CD8-positive, alpha-beta T cell (primary cell): ENCODE measurements at regions of chr2 and their contacts with region 1.

Region 1: DNA sequence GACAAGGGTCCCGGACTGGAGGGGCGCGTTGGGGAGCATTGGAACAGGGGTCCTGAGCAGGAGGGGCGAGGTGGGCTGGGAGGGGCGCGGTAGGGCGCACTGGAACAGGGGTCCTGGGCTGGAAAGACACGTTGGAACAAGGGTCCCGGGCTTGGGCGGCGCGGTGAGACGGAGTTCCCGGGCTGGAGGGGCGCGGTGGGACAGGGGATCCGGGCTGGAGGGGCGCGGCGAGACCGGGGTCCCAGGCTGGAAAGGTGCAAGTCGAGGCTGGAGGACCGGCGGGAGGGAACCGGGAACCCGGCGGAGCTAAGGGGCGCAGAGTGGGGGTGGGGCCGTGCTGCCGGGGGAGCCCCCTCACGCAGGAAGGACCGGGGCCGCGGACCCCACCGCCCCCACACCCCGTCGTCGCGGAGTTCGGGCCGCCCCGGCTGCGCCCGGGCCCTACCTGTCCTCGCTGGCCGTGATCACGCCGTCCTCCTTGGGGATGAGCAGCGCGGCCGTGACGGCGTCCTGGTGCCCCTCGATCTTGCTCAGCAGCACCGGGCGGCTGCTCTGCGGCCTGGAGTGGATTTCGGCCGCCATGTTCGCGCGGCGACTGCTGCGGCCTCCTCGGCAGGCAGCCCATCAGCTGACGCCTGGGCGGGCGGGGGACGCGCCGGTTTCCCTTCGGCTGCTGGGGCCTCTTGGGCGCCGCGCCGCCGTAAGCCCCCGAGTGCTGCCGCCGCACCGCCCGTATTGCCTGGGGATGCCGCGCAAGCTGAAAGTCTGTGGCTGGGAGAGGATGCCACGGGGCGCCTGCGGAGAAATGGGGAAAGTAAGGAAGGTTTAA is at the start of gene WDFY1:
- DNase-seq: peak; percentile 59 to 88 (median 79)
- ATAC-seq: peak; percentile 82
- H3K4me3 ChIP-seq: peak within 1 kb of the TSS; percentile 83 to 86
- H3K4me3 Mint-ChIP-seq: peak within 1 kb of the TSS; percentile 92
- H3K27ac ChIP-seq: peak within 1 kb of the TSS; percentile 62 to 63
- H3K27ac Mint-ChIP-seq: peak within 1 kb of the TSS; percentile 85
- H3K4me1 ChIP-seq: peaks cover 30% of the 10 kb centered on the region
- H3K4me1 Mint-ChIP-seq: peaks cover 43% of the 10 kb centered on the region
- H3K27me3 ChIP-seq: no peaks in the 10 kb centered on the region
- H3K27me3 Mint-ChIP-seq: no peaks in the 10 kb centered on the region
- CTCF ChIP-seq: no peak
- total RNA-seq, gene WDFY1: 38.6 to 42.6 TPM

Region 2: GRCh38 chr2:223760838-223761502 is 183.9 kb before region 1 on chr2:
- CTCF ChIA-PET with region 1: no interaction called
- POLR2A ChIA-PET with region 1: no interaction called
- intact Hi-C with region 1: loop called in 1 of 2 experiments (anchors 5 kb)
- DNase-seq: peak; percentile 21 to 89 (median 56)
- ATAC-seq: peak; percentile 87
- H3K4me3 ChIP-seq: peak overlapping the region in 1 of 2 experiments; percentile 26
- H3K4me3 Mint-ChIP-seq: peak overlapping the region; percentile 53
- H3K27ac ChIP-seq: peak overlapping the region; percentile 34 to 81
- H3K27ac Mint-ChIP-seq: peak overlapping the region; percentile 88
- H3K4me1 ChIP-seq: no peaks in the 10 kb centered on the region
- H3K4me1 Mint-ChIP-seq: peaks cover 20% of the 10 kb centered on the region
- H3K27me3 ChIP-seq: no peaks in the 10 kb centered on the region
- H3K27me3 Mint-ChIP-seq: no peaks in the 10 kb centered on the region
- CTCF ChIP-seq: peak; percentile 24

Region 3: DNA sequence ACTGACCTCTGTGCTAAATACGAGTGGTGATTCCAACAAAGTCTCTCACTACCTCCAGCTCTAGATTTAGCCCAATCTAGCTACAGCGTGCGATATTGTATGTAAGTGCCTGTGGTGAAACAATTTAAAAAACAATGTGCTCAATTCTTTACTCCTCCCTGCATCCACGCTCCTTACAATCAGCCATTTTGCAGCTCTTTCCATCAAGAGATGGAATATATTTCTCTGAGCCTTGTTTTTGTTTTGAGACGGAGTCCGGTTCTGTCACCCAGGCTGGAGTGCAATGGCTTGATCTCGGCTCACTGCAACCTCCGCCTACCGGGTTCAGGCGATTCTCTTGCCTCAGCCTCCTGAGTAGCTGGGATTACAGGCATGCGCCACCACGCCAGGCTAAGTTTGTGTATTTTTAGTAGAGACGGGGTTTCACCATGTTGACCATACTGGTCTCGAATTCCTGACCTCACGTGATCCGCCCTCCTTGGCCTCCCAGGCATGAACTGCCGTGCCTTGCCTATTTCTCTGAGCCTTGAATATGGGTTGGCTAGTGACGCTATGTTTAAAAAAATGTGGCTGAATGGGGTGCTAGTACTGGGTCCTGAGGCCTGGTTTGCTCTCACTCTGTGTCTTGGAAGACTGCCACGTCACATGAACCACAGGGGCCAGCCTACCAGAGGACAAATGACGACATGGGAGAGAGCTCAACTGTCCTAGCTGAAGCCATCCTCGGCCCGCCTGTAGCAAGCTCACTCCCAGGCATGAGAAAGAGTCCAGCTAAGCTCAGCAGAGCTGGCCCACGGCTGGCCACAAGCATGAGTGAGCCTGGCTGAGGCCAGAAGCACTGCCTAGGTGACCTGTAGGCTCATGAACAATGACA is 14.6 kb before region 1 on chr2:
- CTCF ChIA-PET with region 1: no interaction called
- POLR2A ChIA-PET with region 1: interaction called, 3 read pairs
- intact Hi-C with region 1: loop called in 1 of 2 experiments (anchors 1 kb)
- DNase-seq: peak in 2 of 9 experiments; percentile 17 to 23
- ATAC-seq: no peak
- H3K4me3 ChIP-seq: no peak overlapping the region
- H3K4me3 Mint-ChIP-seq: peak overlapping the region; percentile 37
- H3K27ac ChIP-seq: no peak overlapping the region
- H3K27ac Mint-ChIP-seq: peak overlapping the region; percentile 81
- H3K4me1 ChIP-seq: peaks cover 14% of the 10 kb centered on the region
- H3K4me1 Mint-ChIP-seq: peaks cover 51% of the 10 kb centered on the region
- H3K27me3 ChIP-seq: no peaks in the 10 kb centered on the region
- H3K27me3 Mint-ChIP-seq: no peaks in the 10 kb centered on the region
- CTCF ChIP-seq: no peak

Region 4: GRCh38 chr2:224638301-224638823 is 693.4 kb after region 1 on chr2:
- CTCF ChIA-PET with region 1: no interaction called
- POLR2A ChIA-PET with region 1: no interaction called
- intact Hi-C with region 1: no loop called
- DNase-seq: peak in 1 of 9 experiments; percentile 15
- ATAC-seq: peak; percentile 44
- H3K4me3 ChIP-seq: no peak overlapping the region
- H3K4me3 Mint-ChIP-seq: no peak overlapping the region
- H3K27ac ChIP-seq: no peak overlapping the region
- H3K27ac Mint-ChIP-seq: peak overlapping the region; percentile 62
- H3K4me1 ChIP-seq: no peaks in the 10 kb centered on the region
- H3K4me1 Mint-ChIP-seq: peaks cover 10% of the 10 kb centered on the region
- H3K27me3 ChIP-seq: peaks cover 0 to 2% of the 10 kb centered on the region in 2 experiments
- H3K27me3 Mint-ChIP-seq: peaks cover 10% of the 10 kb centered on the region
- CTCF ChIP-seq: no peak